WTC11 (cell line): ENCODE measurements at regions of chr15 and their contacts with region 1.

Region 1: GRCh38 chr15:58864602-58865424 is 68.7 kb downstream of the SLTM start:
- DNase-seq: peak; percentile 64
- ATAC-seq: peak; percentile 66
- H3K4me3 Mint-ChIP-seq: peak overlapping the region; percentile 61
- H3K27ac Mint-ChIP-seq: no peak overlapping the region
- H3K4me1 Mint-ChIP-seq: peaks cover 9% of the 10 kb centered on the region
- H3K27me3 Mint-ChIP-seq: peaks cover 15% of the 10 kb centered on the region
- CTCF ChIP-seq: no peak

Region 2: DNA sequence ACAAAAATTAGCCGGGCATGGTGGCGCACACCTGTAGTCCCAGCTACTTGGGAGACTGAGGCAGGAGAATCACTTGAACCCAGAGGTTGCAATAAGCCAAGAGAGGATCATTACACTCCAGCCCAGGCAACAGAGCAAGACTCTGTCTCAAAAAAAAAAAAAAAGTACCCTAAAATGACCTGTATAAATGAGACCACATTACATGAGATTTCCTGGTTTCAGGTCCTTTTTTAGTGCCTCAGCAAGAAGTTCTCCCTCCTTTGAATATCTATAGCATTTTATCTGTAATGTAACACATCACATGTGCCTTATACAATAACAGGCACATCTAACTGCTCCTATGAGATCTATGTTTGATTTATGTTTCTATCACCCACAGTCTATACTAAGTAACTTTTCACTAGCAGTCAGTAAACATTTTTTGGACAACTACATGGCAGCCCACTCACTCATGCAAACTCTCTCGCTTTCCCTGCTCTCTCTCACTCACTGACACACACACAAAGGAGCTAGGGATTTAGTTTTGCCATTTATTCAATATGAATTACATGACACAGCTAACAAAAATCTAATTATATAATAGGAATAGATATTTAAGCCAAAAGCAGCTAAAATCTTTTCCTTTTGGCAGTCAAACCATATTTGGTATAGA is 149.4 kb before region 1 on chr15:
- CTCF ChIA-PET with region 1: no interaction called
- POLR2A ChIA-PET with region 1: no interaction called
- DNase-seq: no peak
- ATAC-seq: no peak
- H3K4me3 Mint-ChIP-seq: no peak overlapping the region
- H3K27ac Mint-ChIP-seq: no peak overlapping the region
- H3K4me1 Mint-ChIP-seq: peaks cover 7% of the 10 kb centered on the region
- H3K27me3 Mint-ChIP-seq: no peaks in the 10 kb centered on the region
- CTCF ChIP-seq: no peak

Region 3: GRCh38 chr15:58830556-58830955 is 34.3 kb before region 1 on chr15:
- CTCF ChIA-PET with region 1: no interaction called
- POLR2A ChIA-PET with region 1: no interaction called
- DNase-seq: no peak
- ATAC-seq: no peak
- H3K4me3 Mint-ChIP-seq: no peak overlapping the region
- H3K27ac Mint-ChIP-seq: peak overlapping the region; percentile 57; the same call in 1 of the 2 replicates
- H3K4me1 Mint-ChIP-seq: peaks cover 28% of the 10 kb centered on the region
- H3K27me3 Mint-ChIP-seq: no peaks in the 10 kb centered on the region
- CTCF ChIP-seq: no peak

Region 4: GRCh38 chr15:58852347-58852746 is 12.5 kb before region 1 on chr15:
- CTCF ChIA-PET with region 1: interaction called, 17 read pairs
- POLR2A ChIA-PET with region 1: no interaction called
- DNase-seq: no peak
- ATAC-seq: no peak
- H3K4me3 Mint-ChIP-seq: no peak overlapping the region
- H3K27ac Mint-ChIP-seq: no peak overlapping the region; the same call in 1 of the 2 replicates
- H3K4me1 Mint-ChIP-seq: no peaks in the 10 kb centered on the region
- H3K27me3 Mint-ChIP-seq: no peaks in the 10 kb centered on the region
- CTCF ChIP-seq: no peak

Region 5: GRCh38 chr15:58898150-58898680 is 33.4 kb after region 1 on chr15:
- CTCF ChIA-PET with region 1: no interaction called
- POLR2A ChIA-PET with region 1: no interaction called
- DNase-seq: no peak
- ATAC-seq: no peak
- H3K4me3 Mint-ChIP-seq: no peak overlapping the region
- H3K27ac Mint-ChIP-seq: no peak overlapping the region
- H3K4me1 Mint-ChIP-seq: no peaks in the 10 kb centered on the region
- H3K27me3 Mint-ChIP-seq: no peaks in the 10 kb centered on the region
- CTCF ChIP-seq: no peak